Natural killer cell (primary cell): ENCODE measurements at regions of chr1 and their contacts with region 1.

Region 1: DNA sequence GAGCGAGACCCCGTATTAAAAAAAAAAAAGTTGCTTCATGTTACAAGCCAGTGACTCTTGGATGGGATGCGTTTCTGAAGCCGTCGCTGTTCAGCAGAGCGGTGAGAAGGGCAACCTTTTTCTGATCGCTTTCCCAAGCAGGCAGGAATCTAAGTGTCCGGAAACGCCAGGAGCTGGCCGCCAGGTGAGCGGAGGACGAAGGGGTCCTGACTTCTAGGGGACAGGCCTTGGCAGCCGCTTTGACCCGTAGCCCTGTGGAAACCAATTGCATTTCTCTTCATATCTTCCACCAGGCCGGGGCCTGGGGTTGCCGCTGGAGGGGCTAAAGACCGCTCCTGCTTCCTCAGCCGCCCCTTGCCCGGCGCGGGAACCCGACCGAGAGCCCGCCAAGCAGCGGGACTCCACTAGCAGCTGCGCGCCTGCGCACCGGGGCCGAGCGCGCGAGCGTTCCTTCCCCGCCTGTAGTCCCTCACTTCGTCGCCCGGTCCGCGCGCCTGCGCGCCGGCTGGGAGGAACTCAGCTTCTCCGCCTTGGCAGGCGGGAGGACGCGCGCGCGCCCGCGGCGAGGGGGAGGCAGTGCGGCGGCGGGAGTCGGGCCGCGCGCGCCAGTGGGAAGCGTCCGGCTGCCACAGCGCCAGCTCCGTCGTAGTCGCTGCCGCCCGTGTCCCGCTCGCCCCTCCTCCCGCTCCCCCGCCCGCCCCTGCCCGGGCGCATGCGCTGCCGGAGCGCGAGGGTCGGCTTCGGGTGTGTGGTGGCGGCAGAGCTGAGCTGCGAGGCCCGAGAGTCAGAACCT is at the start of gene SPEN:
- DNase-seq: peak; percentile 95 to 99
- ATAC-seq: peak; percentile 80 to 95 (median 85)
- H3K4me3 ChIP-seq: peak within 1 kb of the TSS; percentile 98
- H3K4me3 Mint-ChIP-seq: peak within 1 kb of the TSS; percentile 98
- H3K27ac ChIP-seq: peak within 1 kb of the TSS; percentile 99
- H3K27ac Mint-ChIP-seq: peak within 1 kb of the TSS; percentile 95 to 96
- H3K4me1 ChIP-seq: peaks cover 37% of the 10 kb centered on the region
- H3K4me1 Mint-ChIP-seq: peaks cover 30% of the 10 kb centered on the region in 2 donors
- H3K27me3 ChIP-seq: no peaks in the 10 kb centered on the region
- H3K27me3 Mint-ChIP-seq: no peaks in the 10 kb centered on the region
- CTCF ChIP-seq: no peak
- total RNA-seq, gene SPEN: 98.1 to 114 (median 105) TPM

Region 2: DNA sequence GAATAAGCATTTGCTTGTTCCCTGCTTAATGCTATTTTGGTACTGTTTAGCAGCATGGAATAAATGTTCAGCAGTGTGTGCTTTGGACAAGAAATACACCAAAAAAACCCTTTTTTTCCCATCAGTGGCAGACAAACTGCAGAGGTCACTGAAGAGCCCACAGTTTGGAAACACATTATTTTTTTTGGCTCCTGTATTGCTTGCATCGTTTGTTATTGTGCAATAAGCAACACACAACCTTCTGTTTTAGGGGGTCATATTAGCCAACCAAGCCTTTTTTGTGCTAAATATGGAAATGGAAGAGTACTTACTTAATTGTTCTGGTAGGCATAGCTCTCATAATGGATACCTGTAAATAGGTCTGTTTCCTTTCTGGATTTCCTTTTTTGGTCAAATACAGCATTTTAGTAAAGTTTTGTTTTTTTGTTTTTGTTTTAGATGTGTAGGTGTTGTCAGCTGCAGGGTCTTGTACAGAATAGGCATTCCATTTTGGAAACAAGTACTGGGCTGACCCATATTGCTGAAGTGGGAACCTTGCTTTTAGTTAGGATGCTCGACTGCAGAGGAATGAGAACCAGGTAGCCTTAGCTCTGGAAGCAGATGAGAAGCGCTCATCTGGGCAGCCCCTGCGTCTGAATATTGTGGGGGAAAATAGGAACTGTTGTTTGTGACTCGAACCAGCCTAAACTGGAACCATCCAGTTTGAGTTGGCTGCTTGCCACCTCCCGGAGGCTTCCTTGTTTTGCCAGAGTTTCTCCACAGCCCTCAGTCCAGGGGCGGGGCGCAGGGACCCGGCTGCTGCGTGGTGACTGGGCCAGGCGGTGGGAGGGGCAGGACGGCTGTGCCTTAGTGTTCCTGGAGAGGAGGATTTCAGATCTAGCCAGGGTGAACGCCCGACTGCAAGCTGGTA is 38.7 kb after region 1 on chr1:
- intact Hi-C with region 1: loop called (anchors 5 kb)
- DNase-seq: peak; percentile 42 to 48
- ATAC-seq: peak; percentile 57 to 72 (median 58)
- H3K4me3 ChIP-seq: peak overlapping the region; percentile 6
- H3K4me3 Mint-ChIP-seq: peak overlapping the region; percentile 43
- H3K27ac ChIP-seq: peak overlapping the region; percentile 59
- H3K27ac Mint-ChIP-seq: peak overlapping the region; percentile 64 to 76
- H3K4me1 ChIP-seq: peaks cover 22% of the 10 kb centered on the region
- H3K4me1 Mint-ChIP-seq: peaks cover 49 to 57% of the 10 kb centered on the region in 2 donors
- H3K27me3 ChIP-seq: no peaks in the 10 kb centered on the region
- H3K27me3 Mint-ChIP-seq: no peaks in the 10 kb centered on the region
- CTCF ChIP-seq: no peak

Region 3: GRCh38 chr1:15911141-15911540 is 63.8 kb after region 1 on chr1:
- intact Hi-C with region 1: no loop called
- DNase-seq: no peak
- ATAC-seq: no peak
- H3K4me3 ChIP-seq: no peak overlapping the region
- H3K4me3 Mint-ChIP-seq: no peak overlapping the region
- H3K27ac ChIP-seq: no peak overlapping the region
- H3K27ac Mint-ChIP-seq: no peak overlapping the region
- H3K4me1 ChIP-seq: peaks cover 4% of the 10 kb centered on the region
- H3K4me1 Mint-ChIP-seq: peaks cover 7% of the 10 kb centered on the region in 2 donors
- H3K27me3 ChIP-seq: no peaks in the 10 kb centered on the region
- H3K27me3 Mint-ChIP-seq: no peaks in the 10 kb centered on the region
- CTCF ChIP-seq: no peak